HepG2 (cell line): ENCODE measurements at regions of chr3 and their contacts with region 1.

Region 1: GRCh38 chr3:48439820-48440589 is at the starts of genes CCDC51 and TMA7:
- DNase-seq: peak; percentile 96
- ATAC-seq: peak; percentile 94
- H3K4me3 ChIP-seq: peak within 1 kb of the TSS; percentile 90 to 95 (median 93)
- H3K27ac ChIP-seq: peak within 1 kb of the TSS; percentile 73
- H3K4me1 ChIP-seq: peaks cover 52% of the 10 kb centered on the region
- H3K27me3 ChIP-seq: no peaks in the 10 kb centered on the region; a peak in 1 of 5 replicates
- CTCF ChIP-seq: peak; percentile 19; the same call in 1 of the 2 replicates
- EP300 ChIP-seq: no peak
- POLR2A ChIP-seq: peak; percentile 79 to 86
- RAD21 ChIP-seq: peak; percentile 7; the same call in 1 of the 2 replicates
- total RNA-seq, gene CCDC51: 29.4 and 38.3 TPM in 2 replicates
- total RNA-seq, gene TMA7: 486 and 510 TPM in 2 replicates

Region 2: DNA sequence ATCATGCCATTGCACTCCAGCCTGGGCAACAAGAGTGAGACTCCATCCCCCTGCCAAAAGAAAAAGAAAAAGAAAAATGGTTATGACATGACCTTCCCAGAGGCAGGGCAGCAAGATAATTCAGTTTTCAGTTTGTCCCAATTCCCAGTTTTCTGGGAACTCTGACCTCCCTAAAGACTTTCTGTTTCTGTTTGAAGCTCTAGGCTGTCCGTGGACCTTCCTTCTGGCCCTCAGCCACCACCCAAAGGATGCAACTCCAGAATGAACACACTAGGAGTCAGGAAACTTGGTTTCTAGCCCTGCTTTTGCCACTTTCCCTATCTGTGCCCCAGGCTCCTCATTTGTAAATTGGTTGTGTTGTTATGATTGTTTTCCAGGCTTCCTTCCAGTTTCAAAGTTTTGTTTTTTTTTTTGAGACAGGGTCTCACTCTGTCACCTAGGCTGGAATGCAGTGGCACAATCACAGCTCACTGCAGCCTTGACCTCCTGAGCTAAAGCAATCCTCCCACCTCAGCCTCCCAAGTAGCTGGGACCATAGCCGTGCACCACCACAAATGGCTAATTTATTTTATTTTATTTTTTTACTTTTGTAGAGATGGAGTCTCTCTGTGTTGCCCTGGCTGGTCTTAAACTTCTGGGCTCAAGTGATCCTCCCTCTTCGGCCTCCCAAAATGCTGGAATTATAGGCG is 320.4 kb before region 1 on chr3:
- CTCF ChIA-PET with region 1: no interaction called
- POLR2A ChIA-PET with region 1: no interaction called
- in situ Hi-C with region 1: no loop called
- intact Hi-C with region 1: no loop called
- DNase-seq: no peak
- ATAC-seq: peak; percentile 40; the same call in 1 of the 3 replicates
- H3K4me3 ChIP-seq: no peak overlapping the region
- H3K27ac ChIP-seq: no peak overlapping the region
- H3K4me1 ChIP-seq: peaks cover 38% of the 10 kb centered on the region
- H3K27me3 ChIP-seq: no peaks in the 10 kb centered on the region; a peak in 1 of 5 replicates
- CTCF ChIP-seq: no peak
- EP300 ChIP-seq: no peak
- POLR2A ChIP-seq: no peak
- RAD21 ChIP-seq: no peak

Region 3: DNA sequence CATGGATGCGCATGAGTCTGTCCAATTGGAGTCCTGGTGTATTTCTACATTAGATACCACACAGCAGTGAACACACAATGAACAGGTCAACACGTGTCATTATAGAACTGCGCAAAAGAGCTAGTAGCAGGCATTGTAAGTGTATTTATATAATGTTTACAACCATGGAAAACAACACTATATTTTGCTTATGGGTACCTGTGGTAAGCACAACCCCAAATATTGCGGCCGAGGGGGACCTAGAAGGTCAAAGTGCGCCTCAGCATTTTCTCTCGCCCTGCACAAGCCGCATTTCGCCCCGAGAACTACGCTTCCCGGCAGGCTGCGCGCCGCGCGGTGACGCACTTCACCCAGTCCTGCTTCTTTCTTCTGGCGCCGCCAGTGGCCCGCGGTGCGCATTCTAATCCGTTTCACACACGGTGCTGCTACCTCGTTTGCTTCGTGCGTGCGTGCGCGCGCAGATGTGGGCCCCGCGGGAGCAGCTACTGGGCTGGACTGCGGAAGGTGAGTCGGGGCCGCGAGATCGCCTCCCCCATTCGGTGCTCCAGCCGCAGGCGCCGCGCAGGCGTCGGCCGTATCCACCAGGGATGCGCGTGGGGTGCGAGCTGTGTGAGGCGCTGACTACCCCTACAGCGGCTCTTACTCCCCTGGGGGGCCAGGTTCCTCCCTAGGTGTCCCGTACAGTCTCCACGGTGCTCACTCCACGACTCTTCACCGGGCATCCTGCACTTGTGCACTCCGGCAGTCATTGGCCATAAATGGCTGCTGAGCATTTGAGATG is 199.1 kb before region 1 on chr3 and contains the start of gene ZNF589:
- CTCF ChIA-PET with region 1: interaction called, 5 read pairs
- POLR2A ChIA-PET with region 1: interaction called, 15 read pairs
- in situ Hi-C with region 1: no loop called
- intact Hi-C with region 1: no loop called
- DNase-seq: peak; percentile 94
- ATAC-seq: peak; percentile 98
- H3K4me3 ChIP-seq: peak within 1 kb of the TSS; percentile 76 to 97 (median 91)
- H3K27ac ChIP-seq: peak within 1 kb of the TSS; percentile 83
- H3K4me1 ChIP-seq: peaks cover 45% of the 10 kb centered on the region
- H3K27me3 ChIP-seq: no peaks in the 10 kb centered on the region
- CTCF ChIP-seq: peak; percentile 86
- EP300 ChIP-seq: no peak
- POLR2A ChIP-seq: peak; percentile 92 to 95
- RAD21 ChIP-seq: 0 out of 2 replicates have a peak, but pooled peaks have one; percentile 23
- total RNA-seq, gene ZNF589: 5.6 and 7.3 TPM in 2 replicates

Region 4: DNA sequence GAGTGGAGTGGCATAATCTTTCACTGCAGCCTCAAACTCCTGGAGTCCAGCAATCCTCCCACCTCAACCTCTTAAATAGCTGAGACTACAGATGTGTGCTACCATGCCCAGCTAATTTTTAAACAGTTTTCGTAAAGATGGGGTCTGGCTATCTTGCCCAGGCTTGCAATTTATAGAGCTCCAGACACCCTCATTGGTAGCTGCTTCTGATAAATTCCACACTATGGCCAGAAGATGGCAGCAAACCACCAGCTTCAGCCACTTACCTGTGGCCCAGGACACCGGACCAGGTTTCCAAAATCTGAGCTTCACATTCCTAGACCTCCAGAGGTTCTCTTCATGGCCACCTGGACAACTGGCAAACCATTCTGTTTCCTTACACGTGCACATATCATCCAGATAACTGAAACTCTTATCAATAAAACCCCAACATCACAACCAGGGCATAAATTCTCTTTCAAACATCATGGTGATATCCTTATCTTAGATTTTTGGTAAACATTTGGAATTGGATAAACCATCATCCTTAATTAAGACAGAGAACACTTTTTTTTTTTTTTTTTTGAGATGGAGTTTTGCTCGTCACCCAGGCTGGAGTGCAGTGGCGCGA is 39.1 kb before region 1 on chr3:
- CTCF ChIA-PET with region 1: interaction called, 117 read pairs
- POLR2A ChIA-PET with region 1: interaction called, 59 read pairs
- in situ Hi-C with region 1: loop called (anchors 5 kb)
- intact Hi-C with region 1: loop called (anchors 1 kb)
- DNase-seq: peak; percentile 73
- ATAC-seq: peak; percentile 17
- H3K4me3 ChIP-seq: no peak overlapping the region
- H3K27ac ChIP-seq: no peak overlapping the region
- H3K4me1 ChIP-seq: peaks cover 17% of the 10 kb centered on the region
- H3K27me3 ChIP-seq: no peaks in the 10 kb centered on the region
- CTCF ChIP-seq: peak; percentile 85
- EP300 ChIP-seq: no peak
- POLR2A ChIP-seq: 0 out of 4 replicates have a peak, but pooled peaks of 1 of the 2 experiments have one; percentile 1
- RAD21 ChIP-seq: peak; percentile 87

Region 5: DNA sequence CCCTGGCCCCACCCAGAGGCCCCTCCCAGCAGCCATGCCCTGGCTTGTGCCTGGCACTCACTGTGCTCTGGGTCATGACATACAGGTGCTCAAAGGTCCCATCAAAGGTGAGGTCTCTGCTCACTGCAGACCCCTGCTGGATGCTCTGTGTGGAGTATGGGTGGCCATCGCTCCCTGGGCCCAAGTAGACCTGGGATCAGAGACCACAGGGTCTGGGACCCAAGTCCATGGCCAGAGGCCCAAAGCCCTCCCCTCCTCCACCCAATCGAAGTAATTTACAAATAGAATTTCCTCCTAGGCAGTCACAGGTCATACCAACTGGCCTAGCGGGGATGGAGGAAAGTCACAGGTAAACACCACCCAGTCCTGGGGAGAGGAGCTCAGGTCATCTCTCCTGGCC is 17.7 kb before region 1 on chr3:
- CTCF ChIA-PET with region 1: interaction called, 25 read pairs
- POLR2A ChIA-PET with region 1: interaction called, 17 read pairs
- in situ Hi-C with region 1: no loop called
- intact Hi-C with region 1: no loop called
- DNase-seq: no peak
- ATAC-seq: peak; percentile 39
- H3K4me3 ChIP-seq: no peak overlapping the region
- H3K27ac ChIP-seq: no peak overlapping the region
- H3K4me1 ChIP-seq: peaks cover 54% of the 10 kb centered on the region
- H3K27me3 ChIP-seq: no peaks in the 10 kb centered on the region
- CTCF ChIP-seq: peak; percentile 61
- EP300 ChIP-seq: no peak
- POLR2A ChIP-seq: peak in 1 of 2 experiments; percentile 29; a peak in 1 of 4 replicates
- RAD21 ChIP-seq: 0 out of 2 replicates have a peak, but pooled peaks have one; percentile 26

Region 6: DNA sequence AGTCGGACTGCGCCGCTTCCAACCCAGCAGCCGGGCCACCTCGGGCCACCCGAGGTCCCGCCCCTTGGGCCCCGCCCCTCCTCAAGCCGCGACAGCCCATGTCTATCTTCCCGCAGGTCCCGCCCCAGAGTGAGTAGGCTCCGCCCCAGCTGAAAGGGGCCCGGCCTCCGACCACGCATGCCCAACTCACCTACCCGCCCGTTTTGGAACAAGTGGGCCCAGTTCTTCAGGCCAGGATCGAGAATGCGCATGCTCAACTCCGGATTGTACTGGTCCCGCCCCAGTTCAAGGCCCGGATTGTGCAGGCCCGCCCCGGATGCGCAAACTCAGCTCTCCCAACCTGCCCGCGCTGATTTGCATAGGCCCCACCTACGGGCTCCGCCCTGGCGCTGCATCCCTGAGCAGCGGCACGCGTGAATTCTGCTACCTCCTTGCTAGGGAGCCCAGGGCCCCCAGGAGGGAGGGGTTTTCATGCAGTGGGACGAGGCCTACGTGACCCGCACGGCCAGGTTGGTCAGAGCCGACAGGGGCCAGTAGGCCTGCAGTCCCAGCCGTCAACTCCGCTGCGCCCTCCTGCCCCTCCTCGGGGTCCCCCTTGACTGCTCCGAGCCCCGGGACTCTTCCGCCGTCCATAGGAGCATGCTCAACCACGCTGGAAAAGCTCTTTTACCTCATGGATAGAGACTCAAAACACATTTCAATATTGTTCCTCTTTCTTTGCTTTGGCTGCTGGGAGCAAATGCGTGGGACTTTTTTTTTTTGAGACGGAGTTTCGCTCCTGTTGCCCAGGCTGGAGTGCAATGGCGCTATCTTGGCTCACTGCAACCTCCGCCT is 117.0 kb after region 1 on chr3 and contains the start of gene PFKFB4:
- CTCF ChIA-PET with region 1: no interaction called
- POLR2A ChIA-PET with region 1: interaction called, 10 read pairs
- in situ Hi-C with region 1: no loop called
- intact Hi-C with region 1: no loop called
- DNase-seq: peak; percentile 98
- ATAC-seq: peak; percentile 79
- H3K4me3 ChIP-seq: peak within 1 kb of the TSS; percentile 76 to 98 (median 92)
- H3K27ac ChIP-seq: peak within 1 kb of the TSS; percentile 77
- H3K4me1 ChIP-seq: peaks cover 88% of the 10 kb centered on the region
- H3K27me3 ChIP-seq: no peaks in the 10 kb centered on the region; a peak in 1 of 5 replicates
- CTCF ChIP-seq: peak; percentile 55
- EP300 ChIP-seq: peak in 1 of 2 experiments; percentile 34; a peak in 1 of 4 replicates
- POLR2A ChIP-seq: peak in 1 of 2 experiments; percentile 28; a peak in 2 of 4 replicates
- RAD21 ChIP-seq: no peak
- total RNA-seq, gene PFKFB4: 6.4 and 7.1 TPM in 2 replicates